Right ventricle myocardium inferior (tissue), 1 donor: ENCODE measurements at regions of chr9 and their contacts with region 1.

Region 1: DNA sequence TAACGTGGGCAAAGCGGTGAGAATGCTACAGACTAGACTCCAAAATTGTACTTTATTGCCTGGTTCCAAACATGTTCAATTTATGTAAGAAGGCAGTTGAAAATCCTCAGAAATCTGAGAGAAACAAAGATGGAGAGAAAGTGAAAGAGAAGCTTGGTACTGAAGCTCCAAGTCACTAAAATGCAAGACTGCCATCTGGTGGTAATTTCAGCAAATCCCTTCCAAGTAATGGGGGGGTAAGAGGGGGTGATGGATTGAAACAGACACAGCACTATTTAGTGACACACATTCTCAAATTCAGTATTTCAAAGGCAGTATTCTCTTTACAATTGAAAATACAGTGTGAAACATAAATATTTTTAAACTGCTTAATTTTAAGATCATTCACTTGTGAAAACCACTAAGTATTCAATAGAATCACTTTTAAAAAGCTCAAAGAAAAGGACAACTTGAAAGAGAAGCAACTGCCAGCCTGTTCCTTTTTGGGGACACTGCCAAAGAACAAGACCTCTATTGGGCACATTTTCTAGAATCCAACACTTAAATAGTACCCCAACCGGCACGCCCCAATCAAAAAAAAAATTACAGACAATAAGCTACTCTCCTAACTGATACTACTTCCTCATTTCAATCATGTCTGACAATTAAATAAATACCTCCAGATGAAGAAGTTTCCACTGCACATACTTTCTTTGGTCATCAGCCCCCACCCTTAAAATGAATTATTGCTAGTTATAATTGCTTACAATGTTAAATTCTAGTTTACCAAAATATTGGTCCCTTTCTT is 131.5 kb downstream of the AGTPBP1 start:
- DNase-seq: no peak
- ATAC-seq: peak; percentile 69

Region 2: GRCh38 chr9:85508616-85509015 is 101.7 kb before region 1 on chr9:
- intact Hi-C with region 1: loop called (anchors 5 kb)
- DNase-seq: no peak
- ATAC-seq: no peak